ENCODE measurements at regions of chr3 and their contacts with region 1.

Region 1: DNA sequence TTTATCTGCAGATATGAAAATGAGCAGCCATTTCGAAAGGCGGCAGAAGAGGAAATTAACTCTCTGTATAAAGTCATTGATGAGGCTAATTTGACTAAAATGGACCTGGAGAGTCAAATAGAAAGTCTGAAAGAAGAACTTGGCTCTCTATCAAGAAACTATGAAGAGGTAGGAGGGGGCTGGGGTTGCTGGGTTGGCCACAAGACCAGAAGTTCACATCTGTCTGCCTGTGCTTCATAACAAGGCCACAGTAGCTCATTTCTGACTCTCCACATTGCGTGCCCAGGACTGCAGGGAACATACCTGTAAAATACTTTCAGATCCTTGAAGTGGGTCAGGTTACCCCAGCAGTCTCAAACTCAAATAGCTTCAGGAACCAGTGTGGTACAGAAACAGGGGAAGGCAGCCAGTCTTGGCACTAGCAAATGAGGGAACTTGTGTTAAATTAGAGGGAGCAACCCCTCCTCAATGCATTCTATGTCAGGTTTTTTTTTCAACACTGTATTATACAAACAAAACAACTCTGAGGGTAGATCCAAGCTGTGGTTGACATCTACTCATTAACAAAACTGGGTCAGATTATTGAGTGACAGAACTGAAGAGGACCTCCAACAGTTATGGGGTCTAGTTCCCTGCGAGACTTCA is 48.7 kb downstream of the BFSP2 start:
- DNase-seq: peak; percentile 84
- H3K4me3 ChIP-seq: peak overlapping the region; percentile 58
- H3K27ac ChIP-seq: peak overlapping the region; percentile 84
- H3K4me1 ChIP-seq: peaks cover 86% of the 10 kb centered on the region
- CTCF ChIP-seq: no peak

Region 2: GRCh38 chr3:133464573-133464972 is 16.0 kb after region 1 on chr3:
- CTCF ChIA-PET with region 1: interaction called, 9 read pairs
- POLR2A ChIA-PET with region 1: interaction called, 176 read pairs
- intact Hi-C with region 1: loop called (anchors 1 kb)
- DNase-seq: peak; percentile 77
- H3K4me3 ChIP-seq: no peak overlapping the region
- H3K27ac ChIP-seq: peak overlapping the region; percentile 96
- H3K4me1 ChIP-seq: peaks cover 94% of the 10 kb centered on the region
- CTCF ChIP-seq: peak; percentile 82

Region 3: GRCh38 chr3:133475245-133476010 is 26.8 kb after region 1 on chr3:
- CTCF ChIA-PET with region 1: interaction called, 3 read pairs
- POLR2A ChIA-PET with region 1: interaction called, 176 read pairs
- intact Hi-C with region 1: loop called (anchors 1 kb)
- DNase-seq: peak; percentile 95
- H3K4me3 ChIP-seq: peak overlapping the region; percentile 57
- H3K27ac ChIP-seq: peak overlapping the region; percentile 98
- H3K4me1 ChIP-seq: peaks cover 98% of the 10 kb centered on the region
- CTCF ChIP-seq: no peak

Region 4: DNA sequence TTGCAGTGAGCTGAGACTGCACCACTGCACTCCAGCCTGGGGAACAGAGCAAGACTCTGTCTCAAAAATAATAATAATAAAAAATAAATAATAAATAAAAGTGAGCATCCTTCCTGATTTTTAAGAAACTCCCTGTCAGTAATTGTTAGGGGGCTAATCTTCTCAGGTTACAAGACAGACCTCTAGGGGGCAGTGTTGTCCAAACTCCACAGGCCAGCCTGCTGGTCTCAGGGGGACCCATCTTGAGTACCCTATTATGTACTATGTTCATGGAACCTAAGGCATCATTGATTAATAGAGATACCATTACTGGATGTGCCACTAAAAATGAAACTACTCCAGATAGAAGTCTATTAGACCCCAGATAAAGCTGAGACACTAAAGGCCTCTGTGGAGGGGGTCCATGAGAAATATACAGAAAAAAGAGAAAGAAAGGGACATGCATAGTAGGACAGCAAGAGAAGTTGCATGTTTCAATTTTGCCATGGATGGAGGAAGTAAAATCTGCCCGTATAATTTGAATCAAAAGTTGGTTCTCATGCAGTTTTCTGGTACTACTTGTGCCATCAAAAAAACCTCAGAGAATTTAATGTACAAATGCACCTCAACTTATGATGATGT is 39.4 kb after region 1 on chr3:
- CTCF ChIA-PET with region 1: no interaction called
- POLR2A ChIA-PET with region 1: interaction called, 7 read pairs
- intact Hi-C with region 1: loop called (anchors 2 kb)
- DNase-seq: no peak
- H3K4me3 ChIP-seq: peak overlapping the region; percentile 61
- H3K27ac ChIP-seq: peak overlapping the region; percentile 92
- H3K4me1 ChIP-seq: peaks cover 49% of the 10 kb centered on the region
- CTCF ChIP-seq: peak; percentile 74

Region 5: DNA sequence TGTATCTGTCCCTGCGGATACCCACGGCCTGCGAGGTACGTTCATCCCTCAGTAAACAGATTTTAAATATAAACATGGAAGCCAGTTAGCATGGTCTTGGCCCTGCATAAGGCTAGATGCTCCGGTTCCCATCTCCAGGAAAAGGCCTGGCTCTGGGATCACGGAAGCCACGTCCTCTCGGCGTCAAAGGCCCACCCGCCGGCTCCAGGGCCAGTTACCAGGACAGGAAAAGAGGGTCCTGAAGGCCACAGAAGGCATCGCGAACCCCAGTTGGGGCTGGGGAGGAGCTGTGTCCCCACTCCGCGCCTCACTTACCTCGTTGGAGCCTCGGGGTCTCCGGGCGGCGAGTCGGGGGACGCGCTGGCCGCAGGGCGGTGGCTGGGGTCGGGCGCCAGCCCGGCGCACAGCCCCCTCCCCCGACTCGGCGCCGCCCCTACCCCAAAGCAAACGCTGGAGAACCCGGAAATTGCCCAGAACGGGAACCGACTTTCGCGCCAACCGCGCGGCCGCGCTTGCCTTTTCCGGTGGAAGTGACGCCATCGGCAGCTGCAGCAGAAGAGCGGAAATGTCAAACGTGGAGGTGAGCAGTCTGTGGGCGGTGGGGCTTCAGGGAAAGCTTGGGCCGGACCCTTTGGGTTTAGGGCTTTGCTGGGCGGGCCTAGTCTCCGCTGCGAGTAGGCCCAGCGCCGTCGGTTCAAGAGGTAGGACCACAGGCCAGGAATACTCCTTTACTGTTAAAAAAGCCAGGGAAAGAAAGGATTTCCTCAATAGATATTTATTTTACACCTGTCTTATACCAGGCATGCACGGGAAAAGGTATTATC is 213.1 kb after region 1 on chr3 and contains the start of gene TOPBP1:
- CTCF ChIA-PET with region 1: no interaction called
- POLR2A ChIA-PET with region 1: no interaction called
- intact Hi-C with region 1: loop called (anchors 2 kb)
- DNase-seq: peak; percentile 92
- H3K4me3 ChIP-seq: peak within 1 kb of the TSS; percentile 99
- H3K27ac ChIP-seq: peak within 1 kb of the TSS; percentile 76
- H3K4me1 ChIP-seq: peaks cover 39% of the 10 kb centered on the region
- CTCF ChIP-seq: no peak
- total RNA-seq, gene TOPBP1: 139 and 167 TPM in 2 replicates

Region 6: DNA sequence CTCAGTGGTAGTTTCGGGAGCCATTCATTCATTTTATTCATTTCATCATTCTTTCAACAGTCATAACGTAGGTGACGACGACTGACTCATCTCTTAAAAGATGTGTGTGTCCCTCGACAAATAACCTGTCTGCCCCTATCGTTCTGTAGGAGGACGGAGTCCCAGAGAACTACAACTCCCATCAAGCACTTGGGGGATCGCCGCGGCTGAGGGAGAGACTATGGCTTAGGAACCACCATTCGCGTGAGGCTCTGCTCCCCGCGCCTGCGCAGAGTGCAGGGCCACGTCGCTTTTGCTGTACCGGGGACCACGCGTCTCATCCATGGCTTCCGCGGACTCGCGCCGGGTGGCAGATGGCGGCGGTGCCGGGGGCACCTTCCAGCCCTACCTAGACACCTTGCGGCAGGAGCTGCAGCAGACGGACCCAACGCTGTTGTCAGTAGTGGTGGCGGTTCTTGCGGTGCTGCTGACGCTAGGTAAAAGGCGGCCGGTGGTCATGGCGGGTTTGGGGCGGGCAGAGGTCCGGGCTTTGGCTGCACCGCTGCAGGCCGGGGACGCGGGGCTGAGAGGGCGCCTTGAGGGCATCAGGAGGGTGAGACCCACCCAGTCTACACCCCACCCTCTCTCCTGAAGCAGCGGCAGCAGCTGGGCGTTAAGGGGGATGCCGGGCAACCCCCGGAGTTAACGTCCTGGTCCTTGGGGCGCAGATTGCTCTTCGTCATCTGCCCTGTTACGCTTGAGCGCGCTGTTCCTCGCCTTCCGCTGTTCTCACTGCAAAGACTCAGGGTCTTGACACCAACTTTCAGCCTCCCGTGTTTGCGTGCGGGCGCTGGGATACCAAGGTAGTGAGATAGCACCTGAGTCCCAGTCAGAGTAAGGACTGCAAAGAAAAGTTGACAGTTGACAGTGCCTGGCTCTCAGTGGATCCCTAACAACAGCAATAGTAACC is 357.2 kb after region 1 on chr3 and contains the start of gene SRPRB:
- CTCF ChIA-PET with region 1: no interaction called
- POLR2A ChIA-PET with region 1: no interaction called
- intact Hi-C with region 1: loop called (anchors 5 kb)
- DNase-seq: peak; percentile 96
- H3K4me3 ChIP-seq: peak within 1 kb of the TSS; percentile 87
- H3K27ac ChIP-seq: peak within 1 kb of the TSS; percentile 28
- H3K4me1 ChIP-seq: peaks cover 23% of the 10 kb centered on the region
- CTCF ChIP-seq: no peak
- total RNA-seq, gene SRPRB: 36.0 and 39.4 TPM in 2 replicates

Region 7: DNA sequence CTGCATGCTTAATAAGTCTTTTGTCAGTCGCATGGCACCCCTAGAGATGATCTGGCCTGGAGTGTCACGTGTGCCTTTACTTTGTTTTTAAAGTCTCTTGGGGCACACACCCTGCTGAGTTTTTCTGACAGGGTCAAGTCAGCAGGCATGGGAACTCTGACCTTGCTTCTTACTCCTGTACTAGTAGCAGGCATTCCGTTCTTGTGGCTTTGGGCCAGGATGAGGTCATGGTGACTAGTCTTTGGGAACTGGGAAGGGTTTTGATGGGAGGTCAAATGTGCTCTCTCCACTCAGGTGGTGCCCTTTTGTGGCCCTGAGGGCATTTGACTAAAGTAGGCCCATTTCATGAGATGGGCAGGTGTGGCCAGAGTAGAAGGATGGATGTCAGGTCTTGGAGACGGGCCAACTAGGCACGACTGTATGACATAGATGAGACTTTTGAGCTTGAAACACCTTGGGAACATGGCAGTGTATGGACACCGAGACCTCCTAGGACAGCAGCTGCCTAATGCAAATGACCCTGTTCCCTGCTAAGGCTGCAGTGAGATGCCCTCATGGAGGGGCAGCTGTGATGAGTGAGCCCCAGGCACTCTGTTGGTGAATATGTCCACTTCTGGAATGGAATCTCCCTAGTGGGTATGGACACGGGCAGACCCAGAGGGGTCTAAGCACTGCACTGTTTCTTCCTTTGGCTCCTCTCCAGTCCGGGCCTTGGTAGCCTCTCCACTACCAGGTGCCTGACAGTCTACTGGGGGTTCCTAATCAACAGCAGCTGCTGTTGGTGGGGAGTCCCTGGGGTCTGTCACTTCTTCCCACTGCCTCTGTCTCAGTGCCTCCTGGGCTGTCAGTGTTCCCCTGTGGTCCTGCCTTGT is 373.4 kb after region 1 on chr3:
- CTCF ChIA-PET with region 1: no interaction called
- POLR2A ChIA-PET with region 1: no interaction called
- intact Hi-C with region 1: loop called (anchors 5 kb)
- DNase-seq: no peak
- H3K4me3 ChIP-seq: no peak overlapping the region
- H3K27ac ChIP-seq: no peak overlapping the region
- H3K4me1 ChIP-seq: no peaks in the 10 kb centered on the region
- CTCF ChIP-seq: peak; percentile 51